GM12878 (cell line): ENCODE measurements at regions of chr6 and their contacts with region 1.

Region 1: GRCh38 chr6:96795481-96795880 is 41.8 kb downstream of the GPR63 start:
- DNase-seq: peak; percentile 76
- ATAC-seq: peak; percentile 98
- H3K4me3 ChIP-seq: 0 out of 2 replicates have a peak overlapping the region, but pooled peaks have one; percentile 2
- H3K27ac ChIP-seq: peak overlapping the region; percentile 84
- H3K4me1 ChIP-seq: peaks cover 14% of the 10 kb centered on the region; the same call in 1 of the 2 replicates
- H3K27me3 ChIP-seq: no peaks in the 10 kb centered on the region
- CTCF ChIP-seq: no peak
- EP300 ChIP-seq: peak in 1 of 2 experiments; percentile 72; a peak in 2 of 4 replicates
- POLR2A ChIP-seq: no peak
- RAD21 ChIP-seq: no peak

Region 2: GRCh38 chr6:96727144-96727543 is 68.3 kb before region 1 on chr6:
- CTCF ChIA-PET with region 1: no interaction called
- POLR2A ChIA-PET with region 1: no interaction called
- RAD21 ChIA-PET with region 1: no interaction called
- SMC1A ChIA-PET with region 1: no interaction called
- in situ Hi-C with region 1: no loop called
- intact Hi-C with region 1: no loop called
- DNase-seq: no peak
- ATAC-seq: no peak
- H3K4me3 ChIP-seq: no peak overlapping the region
- H3K27ac ChIP-seq: no peak overlapping the region
- H3K4me1 ChIP-seq: no peaks in the 10 kb centered on the region
- H3K27me3 ChIP-seq: no peaks in the 10 kb centered on the region
- CTCF ChIP-seq: no peak
- EP300 ChIP-seq: no peak
- POLR2A ChIP-seq: no peak
- RAD21 ChIP-seq: no peak

Region 3: DNA sequence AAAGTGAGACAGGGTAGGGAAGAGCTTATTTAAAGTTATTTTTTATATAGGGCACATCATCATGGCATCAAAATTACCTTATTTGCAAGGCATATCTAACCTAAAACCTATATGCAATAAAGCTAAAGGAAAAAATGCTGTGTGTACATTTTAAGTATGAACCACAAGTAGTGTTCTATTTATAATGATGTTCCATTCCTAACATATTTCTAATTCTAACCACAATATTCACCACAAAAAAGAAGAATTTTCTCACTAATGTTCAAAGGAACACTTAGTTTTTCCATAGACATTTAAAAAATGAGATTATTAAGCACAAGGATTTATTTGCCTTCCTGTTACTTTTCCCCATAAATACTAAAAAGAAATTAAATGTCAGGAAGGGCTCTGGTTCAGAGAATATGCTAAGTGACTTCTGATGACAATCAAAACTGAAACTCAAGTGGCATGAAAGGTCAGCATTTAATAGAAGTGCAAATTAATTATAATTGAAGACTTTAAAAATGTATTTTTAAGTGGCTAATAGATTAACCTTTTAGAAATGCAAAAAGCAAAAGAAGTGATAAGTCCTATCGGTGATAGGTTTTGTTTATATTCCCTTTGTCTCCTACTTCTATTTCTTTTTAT is 16.7 kb after region 1 on chr6:
- CTCF ChIA-PET with region 1: interaction called, 17 read pairs
- POLR2A ChIA-PET with region 1: interaction called, 3 read pairs
- RAD21 ChIA-PET with region 1: interaction called, 7 read pairs
- SMC1A ChIA-PET with region 1: interaction called, 16 read pairs
- in situ Hi-C with region 1: no loop called
- intact Hi-C with region 1: no loop called
- DNase-seq: no peak
- ATAC-seq: peak; percentile 46; the same call in 2 of the 3 replicates
- H3K4me3 ChIP-seq: no peak overlapping the region
- H3K27ac ChIP-seq: no peak overlapping the region
- H3K4me1 ChIP-seq: no peaks in the 10 kb centered on the region
- H3K27me3 ChIP-seq: no peaks in the 10 kb centered on the region
- CTCF ChIP-seq: no peak
- EP300 ChIP-seq: no peak
- POLR2A ChIP-seq: no peak
- RAD21 ChIP-seq: no peak

Region 4: GRCh38 chr6:96837081-96837971 is 41.8 kb after region 1 on chr6 and contains the start of gene GPR63:
- CTCF ChIA-PET with region 1: interaction called, 4 read pairs
- POLR2A ChIA-PET with region 1: interaction called, 8 read pairs
- RAD21 ChIA-PET with region 1: interaction called, 30 read pairs
- SMC1A ChIA-PET with region 1: interaction called, 52 read pairs
- in situ Hi-C with region 1: no loop called
- intact Hi-C with region 1: loop called (anchors 1 kb)
- DNase-seq: peak; percentile 50
- ATAC-seq: peak; percentile 92
- H3K4me3 ChIP-seq: peak within 1 kb of the TSS; percentile 92
- H3K27ac ChIP-seq: peak within 1 kb of the TSS; percentile 62
- H3K4me1 ChIP-seq: no peaks in the 10 kb centered on the region; the same call in 1 of the 2 replicates
- H3K27me3 ChIP-seq: no peaks in the 10 kb centered on the region; a peak in 1 of 4 replicates
- CTCF ChIP-seq: 0 out of 6 replicates have a peak, but pooled peaks of 1 of the 3 experiments have one; percentile 5
- EP300 ChIP-seq: no peak; a peak in 1 of 4 replicates
- POLR2A ChIP-seq: peak; percentile 86
- RAD21 ChIP-seq: no peak
- polyA plus RNA-seq, gene GPR63: 1.6 to 1.7 TPM